ENCODE measurements at regions of chr10 and their contacts with region 1.

Region 1: DNA sequence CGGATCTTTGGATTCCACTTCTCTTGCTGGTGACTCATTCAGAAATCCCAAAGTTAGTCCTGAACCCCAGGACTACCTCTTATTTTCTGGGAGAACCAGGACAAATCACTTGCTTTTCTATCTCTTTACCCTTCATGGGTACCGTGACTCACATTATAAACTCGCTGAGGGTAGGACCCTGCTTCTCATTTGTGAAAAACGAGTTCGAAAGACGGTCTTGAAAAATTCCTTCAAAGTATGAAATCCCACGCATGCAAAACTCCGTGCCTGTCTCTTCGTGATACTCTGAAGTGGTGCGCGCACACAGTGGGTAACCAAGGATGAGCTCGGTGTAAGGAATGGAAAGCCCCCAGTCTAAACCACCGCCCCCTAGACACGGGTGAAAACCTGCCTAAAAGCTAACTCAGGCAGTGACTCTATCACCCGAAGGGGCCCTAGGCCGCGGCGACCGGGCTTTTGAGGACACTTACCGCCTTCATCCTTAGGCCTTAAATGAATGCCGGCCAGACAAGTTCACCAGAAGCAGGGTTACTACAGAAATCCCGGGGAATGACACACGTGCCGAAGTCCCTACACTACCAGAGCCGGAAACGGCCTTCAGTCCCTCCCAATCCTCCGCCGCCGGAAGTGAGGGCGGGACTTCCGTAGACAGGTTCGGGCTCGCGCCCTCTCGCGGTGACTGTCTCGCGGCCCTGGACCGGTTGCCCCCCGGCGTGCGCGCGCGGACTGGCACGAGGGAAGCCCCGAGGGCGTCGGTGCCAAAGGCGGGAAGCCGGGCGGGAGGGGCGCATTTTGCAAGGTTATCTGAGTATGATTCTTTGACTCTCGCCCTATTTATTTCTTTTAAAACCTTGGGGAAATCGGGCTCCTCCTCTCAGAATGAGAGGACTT is at the start of gene NOC3L:
- DNase-seq: peak; percentile 70 to 98
- H3K4me3 ChIP-seq: peak within 1 kb of the TSS; percentile 55 to 72
- H3K27ac ChIP-seq: peak within 1 kb of the TSS; percentile 35 to 69
- H3K4me1 ChIP-seq: peaks cover 3 to 11% of the 10 kb centered on the region in 2 donors
- H3K27me3 ChIP-seq: no peaks in the 10 kb centered on the region
- CTCF ChIP-seq: peak; percentile 73 to 94 (median 88)
- total RNA-seq, gene NOC3L: 7.9 TPM

Region 2: DNA sequence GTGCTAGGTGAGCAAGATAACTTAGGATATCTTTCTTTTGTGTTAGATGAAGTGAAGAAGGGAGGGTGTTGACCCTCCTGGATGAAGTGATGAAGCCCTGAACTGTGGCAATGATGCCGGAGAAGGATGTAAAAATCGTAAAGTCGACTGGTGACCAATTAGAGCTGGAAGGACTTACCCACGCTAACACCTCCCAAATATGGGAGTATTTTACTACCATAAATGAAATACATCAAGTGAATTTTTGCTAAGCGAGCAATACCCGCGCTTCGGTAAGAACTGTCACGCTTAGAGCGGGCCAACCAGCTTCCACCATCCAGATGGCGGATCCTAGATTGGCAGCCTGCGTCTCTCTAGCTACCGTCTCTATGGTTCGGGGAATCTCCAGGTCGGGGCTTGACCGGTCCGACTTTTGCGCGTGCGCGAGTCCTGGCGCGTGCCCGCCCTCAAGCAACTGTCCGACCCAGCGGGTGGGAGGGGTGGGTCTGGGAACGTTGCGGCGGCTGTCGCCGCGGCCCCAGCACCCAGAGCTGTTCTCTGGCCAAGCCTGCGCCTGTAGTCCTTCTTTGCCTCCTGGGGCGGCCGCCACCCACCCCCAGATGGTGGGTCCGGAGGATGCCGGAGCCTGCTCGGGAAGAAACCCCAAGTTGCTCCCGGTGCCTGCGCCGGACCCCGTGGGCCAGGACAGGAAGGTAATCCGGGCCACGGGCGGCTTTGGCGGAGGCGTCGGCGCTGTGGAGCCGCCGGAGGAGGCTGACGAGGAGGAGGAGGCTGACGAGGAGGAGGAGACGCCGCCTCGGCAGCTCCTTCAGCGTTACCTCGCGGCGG is 39.6 kb after region 1 on chr10 and contains the start of gene TBC1D12:
- intact Hi-C with region 1: loop called (anchors 1 kb)
- DNase-seq: peak; percentile 78 to 98
- H3K4me3 ChIP-seq: peak within 1 kb of the TSS; percentile 88 to 94
- H3K27ac ChIP-seq: peak within 1 kb of the TSS; percentile 91 to 95
- H3K4me1 ChIP-seq: peaks cover 0 to 6% of the 10 kb centered on the region in 2 donors
- H3K27me3 ChIP-seq: no peaks in the 10 kb centered on the region
- CTCF ChIP-seq: no peak
- total RNA-seq, gene TBC1D12: 9.4 TPM

Measured in ascending aorta (tissue), 2 donors.